Activated CD4-positive, alpha-beta T cell treated with anti-CD3 and anti-CD28 coated beads, Interleukin-2, amount 10 ng/mL, durations not matched to agents 7 days and 5 days (primary cell): ENCODE measurements at regions of chr15 and their contacts with region 1.

Region 1: GRCh38 chr15:63610200-63610841 is 13.1 kb downstream of the FBXL22 start:
- DNase-seq: peak; percentile 86
- H3K4me3 Mint-ChIP-seq: peak overlapping the region; percentile 9
- H3K27ac Mint-ChIP-seq: peak overlapping the region; percentile 91
- H3K4me1 Mint-ChIP-seq: peaks cover 45% of the 10 kb centered on the region
- H3K27me3 Mint-ChIP-seq: no peaks in the 10 kb centered on the region

Region 2: DNA sequence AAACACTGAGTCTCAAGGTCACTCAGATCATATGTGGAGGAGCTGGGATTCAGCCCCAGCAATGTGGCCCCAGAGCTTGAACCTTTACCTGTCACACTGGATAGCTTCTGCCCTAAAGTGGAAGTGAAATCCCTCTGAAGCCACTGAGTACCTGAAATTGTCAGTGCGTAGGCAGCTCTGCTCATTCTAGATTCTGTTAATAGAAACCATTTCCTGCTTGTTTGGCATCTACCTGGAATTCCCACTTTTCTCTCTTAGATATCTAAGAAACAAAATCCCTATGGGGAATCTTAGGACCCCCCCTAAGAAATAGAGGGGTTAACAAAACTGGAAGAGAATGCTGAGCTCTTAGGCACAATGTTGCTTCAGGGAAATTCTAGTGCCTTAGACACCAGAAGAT is 16.6 kb after region 1 on chr15:
- CTCF ChIA-PET with region 1: interaction called, 17 read pairs
- POLR2A ChIA-PET with region 1: no interaction called
- DNase-seq: no peak
- H3K4me3 Mint-ChIP-seq: no peak overlapping the region
- H3K27ac Mint-ChIP-seq: no peak overlapping the region
- H3K4me1 Mint-ChIP-seq: peaks cover 2% of the 10 kb centered on the region
- H3K27me3 Mint-ChIP-seq: no peaks in the 10 kb centered on the region

Region 3: DNA sequence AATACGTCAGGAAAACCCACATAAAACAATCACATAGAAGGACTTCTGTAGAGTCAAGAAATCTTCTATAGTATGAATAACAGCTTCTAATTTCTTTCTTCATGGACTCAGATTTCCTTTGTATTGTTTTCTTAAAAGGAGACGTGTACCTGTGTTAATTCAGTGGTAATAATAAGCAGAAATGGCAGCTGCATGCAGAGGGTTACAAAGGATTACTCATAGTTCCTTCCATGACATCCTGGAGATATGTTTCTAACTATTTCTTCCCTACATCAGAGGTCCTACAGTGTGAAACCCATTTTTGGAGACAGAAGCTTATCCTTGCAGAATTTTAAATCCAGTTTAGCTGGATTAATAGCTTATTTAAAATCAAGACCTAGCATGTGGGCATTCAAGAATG is 23.0 kb after region 1 on chr15:
- CTCF ChIA-PET with region 1: interaction called, 17 read pairs
- POLR2A ChIA-PET with region 1: no interaction called
- DNase-seq: no peak
- H3K4me3 Mint-ChIP-seq: no peak overlapping the region
- H3K27ac Mint-ChIP-seq: no peak overlapping the region
- H3K4me1 Mint-ChIP-seq: peaks cover under 1% of the 10 kb centered on the region
- H3K27me3 Mint-ChIP-seq: no peaks in the 10 kb centered on the region

Region 4: DNA sequence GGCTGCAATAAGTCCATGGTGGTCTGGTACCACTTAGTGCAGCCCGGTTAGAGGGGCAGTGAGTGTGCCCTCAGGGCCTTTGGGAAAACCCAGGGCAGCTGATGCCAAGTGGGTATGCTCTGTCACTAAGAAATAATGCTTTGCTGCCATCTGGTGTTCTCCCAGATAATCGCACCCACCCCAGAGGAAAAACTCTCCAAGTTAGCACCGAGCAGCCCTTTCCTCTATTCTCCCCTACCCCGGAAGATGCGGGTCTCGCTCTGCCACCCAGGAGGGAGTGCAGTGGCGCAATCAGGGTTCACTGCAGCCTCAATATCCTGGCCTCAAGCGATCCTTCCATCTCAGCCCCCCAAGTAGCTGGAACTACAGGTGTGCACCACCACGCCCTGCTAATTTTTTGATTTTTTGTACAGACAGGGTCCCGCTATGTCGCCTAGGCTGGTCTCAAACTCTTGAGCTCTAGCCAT is 457.3 kb after region 1 on chr15:
- CTCF ChIA-PET with region 1: interaction called, 30 read pairs
- POLR2A ChIA-PET with region 1: no interaction called
- DNase-seq: peak; percentile 73
- H3K4me3 Mint-ChIP-seq: no peak overlapping the region
- H3K27ac Mint-ChIP-seq: peak overlapping the region; percentile 56
- H3K4me1 Mint-ChIP-seq: peaks cover 19% of the 10 kb centered on the region
- H3K27me3 Mint-ChIP-seq: no peaks in the 10 kb centered on the region